ENCODE measurements at regions of chr3 and their contacts with region 1.

Region 1: DNA sequence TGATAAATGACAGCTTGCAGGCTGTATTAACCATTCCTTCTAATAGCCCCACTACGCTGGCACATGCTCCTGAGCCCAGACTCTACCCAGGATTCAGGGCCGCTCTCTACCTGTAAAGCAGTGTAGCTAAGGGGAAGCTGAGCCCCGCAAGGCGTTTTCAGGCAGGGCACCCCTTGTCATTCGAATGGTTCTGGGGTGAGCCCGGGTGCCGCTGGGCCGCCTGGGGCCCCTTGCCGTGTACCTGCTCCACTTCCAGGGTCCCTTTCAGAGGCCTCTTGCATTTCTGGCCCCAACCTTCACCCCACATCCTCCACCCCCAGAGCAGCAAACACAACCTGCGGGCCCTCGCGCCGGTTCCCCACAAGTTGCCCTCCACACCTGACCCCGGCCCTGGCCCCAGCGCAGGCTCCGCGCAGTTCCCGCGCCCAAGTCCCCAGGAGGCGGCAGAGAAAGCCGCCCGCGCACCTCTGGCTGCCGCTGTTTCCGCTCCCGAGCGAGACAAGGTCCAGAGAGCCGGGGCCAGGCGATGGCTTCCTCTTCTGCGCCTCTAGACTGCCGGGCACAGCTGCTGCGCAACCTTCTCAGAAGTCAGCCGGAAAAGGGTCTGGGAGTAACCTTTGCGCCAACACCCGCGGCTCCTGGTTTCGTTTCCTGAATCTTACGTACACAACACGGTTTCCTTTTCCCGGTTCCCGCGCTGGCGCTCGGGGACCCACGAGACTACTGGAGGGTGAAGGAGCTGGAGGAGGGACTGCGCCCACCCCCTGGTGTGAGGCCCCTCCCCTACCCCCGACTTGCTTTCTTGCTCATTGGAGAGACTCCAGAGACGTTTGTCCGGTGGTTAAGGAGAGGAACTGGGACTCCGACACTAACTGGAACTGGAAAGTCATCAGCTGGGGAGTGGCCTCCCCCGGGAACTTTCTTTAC is at the start of gene PLSCR1:
- DNase-seq: peak; percentile 67
- ATAC-seq: peak; percentile 87
- H3K4me3 Mint-ChIP-seq: peak within 1 kb of the TSS; percentile 92
- H3K27ac Mint-ChIP-seq: peak within 1 kb of the TSS; percentile 92
- H3K4me1 Mint-ChIP-seq: peaks cover 51% of the 10 kb centered on the region
- H3K27me3 Mint-ChIP-seq: no peaks in the 10 kb centered on the region
- CTCF ChIP-seq: no peak
- total RNA-seq, gene PLSCR1: 34.2 and 37.2 TPM in 2 replicates

Region 2: DNA sequence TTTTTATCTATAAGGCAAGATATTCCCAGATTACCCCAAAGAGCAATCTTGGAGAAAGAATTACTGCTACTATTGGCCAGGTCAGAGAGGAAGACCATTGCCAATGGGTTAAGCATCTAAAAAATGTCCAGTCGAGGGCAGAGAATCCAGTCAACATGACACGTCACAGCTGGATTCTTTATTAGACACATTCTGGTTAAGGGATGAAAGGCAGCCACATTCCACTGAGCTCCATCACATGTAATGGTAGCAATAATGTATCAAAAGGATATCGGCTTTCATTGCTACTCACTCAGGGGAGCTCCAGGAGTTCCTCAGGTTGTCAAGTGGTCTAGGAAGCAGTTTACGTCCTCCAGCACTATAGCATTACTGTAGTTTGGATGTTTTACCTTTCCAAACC is 804.3 kb before region 1 on chr3:
- CTCF ChIA-PET with region 1: no interaction called
- POLR2A ChIA-PET with region 1: no interaction called
- intact Hi-C with region 1: no loop called
- DNase-seq: no peak
- ATAC-seq: no peak
- H3K4me3 Mint-ChIP-seq: no peak overlapping the region
- H3K27ac Mint-ChIP-seq: no peak overlapping the region
- H3K4me1 Mint-ChIP-seq: no peaks in the 10 kb centered on the region
- H3K27me3 Mint-ChIP-seq: no peaks in the 10 kb centered on the region
- CTCF ChIP-seq: no peak

Region 3: DNA sequence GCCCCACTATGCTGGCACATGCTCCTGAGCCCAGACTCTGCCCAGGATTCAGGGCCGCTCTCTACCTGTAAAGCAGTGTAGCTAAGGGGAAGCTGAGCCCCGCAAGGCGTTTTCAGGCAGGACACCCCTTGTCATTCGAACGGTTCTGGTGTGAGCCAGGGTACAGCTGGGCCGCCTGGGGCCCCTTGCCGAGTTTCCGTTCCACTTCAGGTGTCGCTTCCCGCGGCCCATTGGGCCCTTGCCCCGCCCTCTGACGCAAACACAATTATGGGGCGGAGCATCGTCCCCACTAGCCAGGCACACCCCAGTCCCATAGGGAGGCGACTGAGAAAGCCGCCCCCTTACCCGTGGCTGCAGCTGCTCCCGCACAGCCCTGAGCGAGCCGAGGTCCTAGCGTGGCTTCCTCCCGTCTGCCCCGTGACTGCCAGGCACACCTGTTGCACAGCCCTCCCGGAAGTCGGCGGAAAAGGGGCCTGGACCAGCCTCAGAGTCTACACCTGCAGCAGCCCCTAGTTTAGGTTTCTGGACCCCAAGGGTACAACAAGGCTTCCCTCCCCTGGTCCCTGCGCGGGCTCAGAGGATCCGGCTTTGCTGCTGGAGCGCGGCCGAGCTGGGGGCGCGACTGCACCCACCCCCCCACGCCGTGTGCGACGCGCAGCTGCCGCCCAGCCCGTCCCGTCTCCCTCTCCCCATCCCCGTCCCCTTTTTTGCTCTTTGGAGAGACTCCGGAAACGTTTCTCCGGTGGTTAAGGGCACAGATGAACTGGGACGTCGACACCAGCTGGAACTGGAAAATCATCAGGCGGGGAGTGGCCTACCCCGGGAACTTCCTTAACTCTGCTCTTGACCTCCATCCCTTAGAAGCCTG is 74.9 kb before region 1 on chr3 and contains the start of gene PLSCR2:
- CTCF ChIA-PET with region 1: interaction called, 3 read pairs
- POLR2A ChIA-PET with region 1: interaction called, 30 read pairs
- intact Hi-C with region 1: loop called (anchors 1 kb)
- DNase-seq: peak; percentile 82
- ATAC-seq: peak; percentile 97
- H3K4me3 Mint-ChIP-seq: peak within 1 kb of the TSS; percentile 84
- H3K27ac Mint-ChIP-seq: peak within 1 kb of the TSS; percentile 76
- H3K4me1 Mint-ChIP-seq: peaks cover 16% of the 10 kb centered on the region
- H3K27me3 Mint-ChIP-seq: no peaks in the 10 kb centered on the region
- CTCF ChIP-seq: no peak
- total RNA-seq, gene PLSCR2: not detected in 2 replicates

Region 4: DNA sequence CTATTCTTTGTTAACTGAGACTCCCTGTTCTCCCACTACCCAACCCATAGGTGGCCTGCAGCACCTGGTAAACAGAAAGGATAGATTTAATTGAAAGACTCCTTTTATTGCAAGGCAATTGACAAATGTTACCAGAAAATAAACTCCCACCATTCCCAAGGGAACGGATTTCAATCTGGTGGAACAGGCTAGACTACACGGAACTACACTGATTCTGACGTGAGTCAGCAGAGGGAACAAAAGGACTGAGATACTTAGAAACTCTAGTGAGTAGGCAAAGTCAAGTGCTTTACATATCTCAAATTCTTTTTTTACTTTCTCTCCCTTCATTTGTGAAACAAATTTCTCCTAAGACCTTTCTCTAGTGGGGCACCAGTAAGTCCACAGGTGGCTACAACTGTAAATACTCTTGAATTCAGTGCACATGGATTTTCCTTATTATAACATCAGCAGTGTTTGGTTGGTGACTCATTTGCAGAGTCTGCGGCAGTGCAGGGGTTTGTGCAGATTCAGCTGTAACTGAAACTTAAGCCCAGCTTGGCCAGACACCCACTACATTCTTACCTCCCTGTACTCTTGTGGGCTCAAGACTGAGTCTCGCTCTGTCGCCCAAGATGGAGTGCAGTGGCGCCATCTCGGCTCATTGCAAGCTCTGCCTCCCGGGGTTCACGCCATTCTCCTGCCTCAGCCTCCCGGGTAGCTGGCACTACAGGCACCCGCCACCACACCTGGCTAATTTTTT is 40.6 kb before region 1 on chr3:
- CTCF ChIA-PET with region 1: interaction called, 3 read pairs
- POLR2A ChIA-PET with region 1: no interaction called
- intact Hi-C with region 1: loop called (anchors 2 kb)
- DNase-seq: no peak
- ATAC-seq: peak; percentile 84
- H3K4me3 Mint-ChIP-seq: no peak overlapping the region
- H3K27ac Mint-ChIP-seq: peak overlapping the region; percentile 12
- H3K4me1 Mint-ChIP-seq: peaks cover 9% of the 10 kb centered on the region
- H3K27me3 Mint-ChIP-seq: no peaks in the 10 kb centered on the region
- CTCF ChIP-seq: no peak

Region 5: GRCh38 chr3:146569314-146569713 is 25.0 kb after region 1 on chr3:
- CTCF ChIA-PET with region 1: no interaction called
- POLR2A ChIA-PET with region 1: no interaction called
- intact Hi-C with region 1: no loop called
- DNase-seq: no peak
- ATAC-seq: no peak
- H3K4me3 Mint-ChIP-seq: no peak overlapping the region
- H3K27ac Mint-ChIP-seq: no peak overlapping the region
- H3K4me1 Mint-ChIP-seq: no peaks in the 10 kb centered on the region
- H3K27me3 Mint-ChIP-seq: no peaks in the 10 kb centered on the region
- CTCF ChIP-seq: no peak

Measured in activated B cell treated with CpG ODN at 0.5 μM for 24 hours (primary cell).